ENCODE measurements at regions of chr19 and their contacts with region 1.

Region 1: DNA sequence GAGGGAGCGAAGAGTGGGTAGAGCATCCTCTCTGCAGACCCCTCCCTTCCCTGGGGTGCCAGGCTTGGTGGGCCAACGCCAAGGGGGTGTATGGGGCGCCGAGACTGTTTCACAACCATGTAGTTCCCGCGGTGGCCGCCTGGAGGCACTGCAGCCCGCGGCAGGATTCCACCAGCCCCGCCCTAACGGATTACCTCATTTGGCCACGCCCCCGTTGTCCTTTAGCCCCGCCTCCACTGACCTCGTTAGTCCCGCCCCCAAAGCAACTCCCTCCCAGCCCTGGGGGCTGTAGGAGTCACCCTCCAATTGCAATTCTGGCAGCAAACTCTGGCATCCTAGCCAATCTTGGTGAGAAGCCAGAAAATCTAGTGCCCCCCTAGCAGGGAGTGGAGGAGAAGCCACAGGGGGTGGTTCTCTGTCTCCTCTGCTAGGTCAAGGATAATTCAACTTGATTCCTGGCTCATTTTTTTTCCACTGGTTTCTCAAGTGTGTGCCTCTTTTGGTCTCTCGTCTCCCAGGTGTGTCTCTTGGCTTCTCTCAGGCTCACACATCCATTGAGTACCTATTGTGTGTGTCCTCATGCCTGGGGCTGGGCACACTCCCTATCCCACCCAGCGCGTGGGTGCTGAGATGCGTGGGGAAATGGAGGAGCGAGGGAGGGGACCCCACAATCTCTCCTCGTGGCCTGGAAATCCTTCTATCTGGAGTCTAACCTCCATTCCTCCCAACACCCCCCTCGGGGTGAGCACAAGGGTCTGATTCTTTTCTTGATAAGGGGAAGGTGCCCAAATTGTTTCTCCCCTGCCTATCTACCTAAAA is 2.0 kb downstream of the OLFM2 start:
- DNase-seq: peak; percentile 91
- CTCF ChIP-seq: peak; percentile 80

Region 2: GRCh38 chr19:9839415-9839814 is 94.9 kb before region 1 on chr19:
- in situ Hi-C with region 1: no loop called
- DNase-seq: no peak
- CTCF ChIP-seq: no peak

Region 3: GRCh38 chr19:10027158-10027693 is 92.9 kb after region 1 on chr19:
- in situ Hi-C with region 1: loop called (anchors 10 kb)
- DNase-seq: no peak
- CTCF ChIP-seq: no peak

Region 4: GRCh38 chr19:10230861-10231611 is 296.7 kb after region 1 on chr19 and contains the start of gene S1PR2:
- in situ Hi-C with region 1: loop called (anchors 25 kb)
- DNase-seq: peak; percentile 91
- CTCF ChIP-seq: no peak

Region 5: GRCh38 chr19:10380313-10381102 is 446.2 kb after region 1 on chr19 and contains the start of gene TYK2:
- in situ Hi-C with region 1: loop called (anchors 25 kb)
- DNase-seq: peak; percentile 100
- CTCF ChIP-seq: no peak